OCI-LY7 (cell line): ENCODE measurements at regions of chr2 and their contacts with region 1.

Region 1: GRCh38 chr2:3303583-3304406 is 73.8 kb downstream of the EIPR1 start:
- DNase-seq: peak; percentile 54
- H3K4me3 ChIP-seq: no peak overlapping the region
- H3K27ac ChIP-seq: no peak overlapping the region
- H3K4me1 ChIP-seq: no peaks in the 10 kb centered on the region
- CTCF ChIP-seq: peak; percentile 88

Region 2: DNA sequence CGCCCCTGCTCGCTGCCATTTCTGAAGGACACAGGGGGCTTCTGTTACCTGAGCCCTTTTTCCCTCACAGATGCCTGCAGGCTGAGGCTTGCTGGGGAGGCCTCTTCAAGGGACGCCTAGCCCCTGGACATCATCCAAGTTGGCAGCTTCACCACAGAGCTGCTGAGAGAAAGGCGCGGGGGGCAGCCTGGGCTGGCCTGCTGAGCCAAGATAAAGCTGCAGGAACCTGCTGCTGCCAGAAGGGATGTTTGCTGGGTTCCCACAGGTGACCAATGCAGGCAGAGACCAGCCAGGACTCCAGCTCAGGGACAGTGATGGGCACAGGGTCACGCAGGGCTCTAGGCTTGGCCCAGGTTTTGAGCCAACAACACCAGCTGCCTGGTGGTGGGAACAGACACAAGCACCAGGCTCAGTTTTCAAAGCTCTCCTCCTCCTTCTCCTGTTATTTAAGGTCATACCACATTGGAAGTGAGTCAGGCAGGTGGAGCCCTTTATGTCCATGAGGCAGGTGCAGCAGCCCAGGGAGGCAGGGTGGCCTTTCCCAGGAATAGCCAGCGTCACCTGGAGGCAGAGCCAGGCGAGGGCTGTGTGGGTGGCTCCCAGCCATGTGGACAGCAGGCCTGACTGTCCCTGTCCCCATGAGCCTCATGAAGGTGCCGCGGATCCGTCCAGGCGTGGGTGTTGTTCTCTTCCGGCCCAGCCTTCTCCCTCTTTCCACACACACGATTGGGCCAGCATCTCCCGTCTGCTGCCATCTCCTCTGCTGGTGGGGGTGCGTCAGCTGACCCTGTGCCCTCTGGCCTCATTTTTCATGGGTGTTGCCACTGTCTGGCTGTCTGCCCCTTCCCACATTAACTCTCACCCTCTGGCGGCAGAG is 457.2 kb before region 1 on chr2:
- CTCF ChIA-PET with region 1: no interaction called
- POLR2A ChIA-PET with region 1: no interaction called
- intact Hi-C with region 1: loop called (anchors 5 kb)
- DNase-seq: no peak
- H3K4me3 ChIP-seq: no peak overlapping the region
- H3K27ac ChIP-seq: no peak overlapping the region
- H3K4me1 ChIP-seq: no peaks in the 10 kb centered on the region
- CTCF ChIP-seq: no peak

Region 3: GRCh38 chr2:3001615-3002560 is 301.9 kb before region 1 on chr2:
- CTCF ChIA-PET with region 1: no interaction called
- POLR2A ChIA-PET with region 1: no interaction called
- intact Hi-C with region 1: loop called (anchors 10 kb)
- DNase-seq: peak; percentile 18
- H3K4me3 ChIP-seq: no peak overlapping the region
- H3K27ac ChIP-seq: no peak overlapping the region
- H3K4me1 ChIP-seq: no peaks in the 10 kb centered on the region
- CTCF ChIP-seq: peak; percentile 58